CD4-positive, alpha-beta T cell (primary cell): ENCODE measurements at regions of chr7 and their contacts with region 1.

Region 1: GRCh38 chr7:26291699-26292538 is at the start of gene SNX10:
- DNase-seq: peak; percentile 40 to 91 (median 64)
- ATAC-seq: peak; percentile 82
- H3K4me3 ChIP-seq: peak within 1 kb of the TSS; percentile 89
- H3K4me3 Mint-ChIP-seq: peak within 1 kb of the TSS; percentile 95
- H3K27ac ChIP-seq: peak within 1 kb of the TSS; percentile 46 to 53
- H3K27ac Mint-ChIP-seq: peak within 1 kb of the TSS; percentile 72
- H3K4me1 ChIP-seq: peaks cover 38% of the 10 kb centered on the region
- H3K4me1 Mint-ChIP-seq: peaks cover 37% of the 10 kb centered on the region
- H3K27me3 ChIP-seq: no peaks in the 10 kb centered on the region
- H3K27me3 Mint-ChIP-seq: no peaks in the 10 kb centered on the region
- CTCF ChIP-seq: no peak
- total RNA-seq, gene SNX10: 4.6 to 5.8 TPM

Region 2: GRCh38 chr7:26329520-26330255 is 37.8 kb after region 1 on chr7:
- CTCF ChIA-PET with region 1: no interaction called
- POLR2A ChIA-PET with region 1: no interaction called
- intact Hi-C with region 1: no loop called
- DNase-seq: peak in 3 of 14 experiments; percentile 8 to 53 (median 48)
- ATAC-seq: no peak
- H3K4me3 ChIP-seq: no peak overlapping the region
- H3K4me3 Mint-ChIP-seq: no peak overlapping the region
- H3K27ac ChIP-seq: no peak overlapping the region
- H3K27ac Mint-ChIP-seq: no peak overlapping the region
- H3K4me1 ChIP-seq: no peaks in the 10 kb centered on the region
- H3K4me1 Mint-ChIP-seq: peaks cover 25% of the 10 kb centered on the region
- H3K27me3 ChIP-seq: no peaks in the 10 kb centered on the region
- H3K27me3 Mint-ChIP-seq: no peaks in the 10 kb centered on the region
- CTCF ChIP-seq: no peak

Region 3: GRCh38 chr7:26633557-26633956 is 341.6 kb after region 1 on chr7:
- CTCF ChIA-PET with region 1: no interaction called
- POLR2A ChIA-PET with region 1: no interaction called
- intact Hi-C with region 1: no loop called
- DNase-seq: no peak
- ATAC-seq: no peak
- H3K4me3 ChIP-seq: no peak overlapping the region
- H3K4me3 Mint-ChIP-seq: no peak overlapping the region
- H3K27ac ChIP-seq: no peak overlapping the region
- H3K27ac Mint-ChIP-seq: no peak overlapping the region
- H3K4me1 ChIP-seq: peaks cover 4% of the 10 kb centered on the region
- H3K4me1 Mint-ChIP-seq: no peaks in the 10 kb centered on the region
- H3K27me3 ChIP-seq: no peaks in the 10 kb centered on the region
- H3K27me3 Mint-ChIP-seq: peaks cover 4% of the 10 kb centered on the region
- CTCF ChIP-seq: no peak

Region 4: DNA sequence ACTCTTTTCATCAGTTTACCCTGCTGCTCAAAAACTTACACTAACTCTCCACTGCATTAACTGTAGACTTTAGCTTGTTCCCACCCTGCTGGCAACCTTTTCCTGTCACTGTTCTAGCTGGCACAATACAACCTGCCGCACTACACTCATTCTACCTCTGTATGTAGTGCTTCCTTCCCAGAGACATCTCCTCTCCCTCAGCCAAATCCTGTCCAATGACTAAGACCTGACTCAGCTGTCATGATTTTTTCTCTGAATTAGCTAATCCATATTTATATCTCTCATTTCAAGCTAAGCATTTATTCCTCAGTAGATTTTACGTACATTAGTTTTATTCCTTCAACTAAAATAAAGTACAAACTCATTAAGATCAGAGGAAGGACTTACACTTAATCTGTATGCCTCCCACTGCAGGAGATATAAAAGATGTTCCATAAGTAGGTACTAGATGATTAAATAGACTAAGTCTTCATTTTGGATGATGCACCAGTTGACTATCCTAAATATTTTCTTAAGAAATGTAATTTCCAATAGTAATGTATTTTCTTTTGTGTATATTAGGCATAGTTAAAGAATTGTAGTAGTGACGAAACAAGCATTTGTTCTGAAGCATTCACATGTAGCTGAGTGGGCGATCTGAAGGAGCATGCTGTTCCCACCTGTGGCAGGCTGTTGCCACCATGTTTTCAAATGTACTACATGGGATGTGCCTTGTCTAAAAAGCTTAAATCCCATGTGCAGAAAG is 383.4 kb after region 1 on chr7:
- CTCF ChIA-PET with region 1: no interaction called
- POLR2A ChIA-PET with region 1: no interaction called
- intact Hi-C with region 1: loop called in 1 of 2 experiments (anchors 10 kb)
- DNase-seq: no peak
- ATAC-seq: no peak
- H3K4me3 ChIP-seq: no peak overlapping the region
- H3K4me3 Mint-ChIP-seq: no peak overlapping the region
- H3K27ac ChIP-seq: no peak overlapping the region
- H3K27ac Mint-ChIP-seq: no peak overlapping the region
- H3K4me1 ChIP-seq: no peaks in the 10 kb centered on the region
- H3K4me1 Mint-ChIP-seq: no peaks in the 10 kb centered on the region
- H3K27me3 ChIP-seq: peaks cover 0 to 2% of the 10 kb centered on the region in 2 experiments
- H3K27me3 Mint-ChIP-seq: peaks cover 36% of the 10 kb centered on the region
- CTCF ChIP-seq: no peak